Sigmoid colon (tissue), 7 donors: ENCODE measurements at regions of chr18 and their contacts with region 1.

Region 1: DNA sequence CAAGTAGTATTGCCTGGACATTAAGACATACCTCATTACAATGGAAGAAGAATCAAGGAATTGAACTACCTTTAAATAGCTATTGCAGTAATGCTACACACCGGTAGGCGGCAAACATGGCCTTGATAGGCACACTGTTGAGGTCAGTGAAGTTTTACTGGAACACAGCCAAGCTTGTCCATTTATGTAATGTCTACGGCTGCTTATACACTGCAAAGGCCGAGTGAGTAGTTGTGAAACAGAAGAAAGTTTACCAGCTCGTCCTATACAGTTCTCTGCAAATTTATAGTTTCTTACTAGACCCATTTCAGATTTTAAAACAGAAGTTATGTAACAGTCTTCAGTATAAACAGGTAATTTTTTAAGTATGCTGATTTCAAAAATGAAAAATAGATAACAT is 38.8 kb downstream of the PPP4R1 start:
- DNase-seq: peak; percentile 91
- H3K4me3 ChIP-seq: no peak overlapping the region
- H3K27ac ChIP-seq: peak overlapping the region in 3 of 4 donors; percentile 37 to 53 (median 44)
- H3K4me1 ChIP-seq: peaks cover 0 to 21% (median 11%) of the 10 kb centered on the region in 4 donors
- H3K27me3 ChIP-seq: no peaks in the 10 kb centered on the region
- CTCF ChIP-seq: peak; percentile 74 to 95 (median 84)
- EP300 ChIP-seq: no peak
- POLR2A ChIP-seq: no peak

Region 2: GRCh38 chr18:9614401-9615279 is 39.1 kb after region 1 on chr18 and contains the start of gene PPP4R1:
- intact Hi-C with region 1: loop called (anchors 2 kb)
- DNase-seq: peak; percentile 90
- H3K4me3 ChIP-seq: peak within 1 kb of the TSS; percentile 60 to 98 (median 92)
- H3K27ac ChIP-seq: peak within 1 kb of the TSS; percentile 96 to 99 (median 98)
- H3K4me1 ChIP-seq: peaks cover 0 to 47% (median 37%) of the 10 kb centered on the region in 4 donors
- H3K27me3 ChIP-seq: no peaks in the 10 kb centered on the region
- CTCF ChIP-seq: no peak
- EP300 ChIP-seq: no peak
- POLR2A ChIP-seq: no peak
- total RNA-seq, gene PPP4R1: 126 to 163 (median 153) TPM

Region 3: DNA sequence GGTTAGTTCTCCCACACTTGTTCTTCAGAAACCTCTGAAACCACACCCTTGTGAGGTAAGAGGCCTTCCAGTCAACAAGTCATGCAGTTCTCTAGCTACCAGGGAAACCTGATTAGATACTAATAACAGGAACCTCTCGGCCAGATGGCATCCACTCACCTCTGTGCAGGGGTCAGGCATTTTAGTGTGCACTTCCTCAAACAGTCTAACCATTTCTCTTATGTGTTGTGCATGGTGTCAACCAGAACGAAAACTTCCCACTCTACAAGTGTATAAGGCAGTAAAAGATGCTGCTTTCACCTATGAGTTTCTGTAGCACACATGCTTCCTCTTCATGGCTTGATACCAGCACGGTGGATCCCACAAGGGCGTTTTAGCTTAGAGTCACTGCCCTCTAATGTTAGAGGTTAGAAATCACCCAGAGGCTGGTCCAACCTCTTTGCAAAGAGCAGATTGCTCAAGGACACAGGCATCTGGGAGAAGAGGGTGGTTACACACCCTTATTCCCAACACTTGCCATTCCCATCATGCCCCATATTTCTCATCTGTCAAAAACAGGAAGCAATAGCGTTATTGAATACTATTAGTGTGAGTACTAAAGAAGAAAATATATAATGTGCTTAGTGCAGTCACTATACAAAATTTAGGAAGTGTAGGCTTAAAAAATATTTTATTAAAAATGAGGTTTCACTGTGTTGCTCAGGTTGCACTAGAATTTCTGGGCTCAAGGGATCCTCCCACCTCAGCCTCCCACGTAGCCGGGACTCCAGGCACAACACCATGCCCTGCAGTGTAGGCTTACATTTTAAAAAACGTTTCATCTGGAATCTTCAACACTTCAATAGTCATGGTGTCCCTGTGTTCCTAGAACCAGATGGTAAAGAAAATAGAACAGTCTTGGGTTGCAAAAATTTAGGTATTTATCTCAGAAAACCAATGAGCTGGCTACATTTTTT is 98.0 kb after region 1 on chr18:
- intact Hi-C with region 1: loop called (anchors 10 kb)
- DNase-seq: no peak
- H3K4me3 ChIP-seq: no peak overlapping the region
- H3K27ac ChIP-seq: no peak overlapping the region
- H3K4me1 ChIP-seq: peaks cover 0 to 13% (median 5%) of the 10 kb centered on the region in 4 donors
- H3K27me3 ChIP-seq: no peaks in the 10 kb centered on the region
- CTCF ChIP-seq: no peak
- EP300 ChIP-seq: no peak
- POLR2A ChIP-seq: no peak

Region 4: DNA sequence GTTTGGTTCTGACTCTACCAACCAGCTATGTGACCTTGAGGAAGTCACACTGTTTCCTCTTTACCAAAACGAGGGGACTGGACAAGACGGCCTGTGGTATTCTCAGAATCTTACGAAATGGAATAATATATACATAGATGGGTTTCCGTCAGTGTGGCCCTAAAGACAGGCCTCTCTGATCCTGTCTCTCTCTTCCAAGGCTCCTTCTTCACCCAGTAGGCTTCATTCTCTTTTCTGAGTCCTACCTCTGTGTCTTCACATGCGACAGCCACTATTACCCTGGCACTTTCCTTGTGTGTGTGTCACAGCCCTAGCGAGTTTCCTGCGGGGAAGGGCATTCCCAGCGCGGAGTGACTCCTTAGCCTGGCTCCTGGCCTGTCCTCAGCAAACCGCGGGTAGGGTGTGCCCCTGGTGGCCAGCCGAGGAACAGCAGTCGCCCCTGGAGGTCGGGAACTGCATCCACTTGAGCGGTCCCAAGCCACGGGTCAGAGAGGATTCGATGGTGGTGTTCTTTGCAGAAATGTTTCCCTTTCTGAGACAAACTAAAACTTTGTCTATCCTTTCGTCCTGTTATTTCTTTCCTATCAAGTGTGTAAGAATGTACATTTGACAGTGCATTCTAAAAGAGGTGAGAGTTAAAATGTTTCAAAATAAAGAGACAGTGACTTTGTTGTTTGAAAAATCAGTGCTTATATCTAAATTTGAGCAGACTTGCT is 195.9 kb after region 1 on chr18:
- intact Hi-C with region 1: loop called (anchors 1 kb)
- DNase-seq: peak; percentile 90
- H3K4me3 ChIP-seq: no peak overlapping the region
- H3K27ac ChIP-seq: peak overlapping the region in 3 of 4 donors; percentile 18 to 57 (median 19)
- H3K4me1 ChIP-seq: peaks cover 0 to 37% (median 12%) of the 10 kb centered on the region in 4 donors
- H3K27me3 ChIP-seq: no peaks in the 10 kb centered on the region
- CTCF ChIP-seq: peak; percentile 83 to 96 (median 93)
- EP300 ChIP-seq: peak in 1 of 4 donors; percentile 68
- POLR2A ChIP-seq: no peak

Region 5: GRCh38 chr18:9913526-9914333 is 338.2 kb after region 1 on chr18 and contains the start of gene VAPA:
- intact Hi-C with region 1: loop called (anchors 10 kb)
- DNase-seq: peak; percentile 98
- H3K4me3 ChIP-seq: peak within 1 kb of the TSS; percentile 89 to 95 (median 90)
- H3K27ac ChIP-seq: peak within 1 kb of the TSS; percentile 98 to 100 (median 100)
- H3K4me1 ChIP-seq: peaks cover 0 to 41% (median 34%) of the 10 kb centered on the region in 4 donors
- H3K27me3 ChIP-seq: no peaks in the 10 kb centered on the region
- CTCF ChIP-seq: no peak
- EP300 ChIP-seq: no peak
- POLR2A ChIP-seq: peak; percentile 95
- total RNA-seq, gene VAPA: 252 to 336 (median 291) TPM